Head of caudate nucleus (tissue), 42 donors: ENCODE measurements at regions of chr7 and their contacts with region 1.

Region 1: GRCh38 chr7:732094-732541 is 5.0 kb upstream of the PRKAR1B start:
- DNase-seq: peak in 1 of 42 donors; percentile 39

Region 2: DNA sequence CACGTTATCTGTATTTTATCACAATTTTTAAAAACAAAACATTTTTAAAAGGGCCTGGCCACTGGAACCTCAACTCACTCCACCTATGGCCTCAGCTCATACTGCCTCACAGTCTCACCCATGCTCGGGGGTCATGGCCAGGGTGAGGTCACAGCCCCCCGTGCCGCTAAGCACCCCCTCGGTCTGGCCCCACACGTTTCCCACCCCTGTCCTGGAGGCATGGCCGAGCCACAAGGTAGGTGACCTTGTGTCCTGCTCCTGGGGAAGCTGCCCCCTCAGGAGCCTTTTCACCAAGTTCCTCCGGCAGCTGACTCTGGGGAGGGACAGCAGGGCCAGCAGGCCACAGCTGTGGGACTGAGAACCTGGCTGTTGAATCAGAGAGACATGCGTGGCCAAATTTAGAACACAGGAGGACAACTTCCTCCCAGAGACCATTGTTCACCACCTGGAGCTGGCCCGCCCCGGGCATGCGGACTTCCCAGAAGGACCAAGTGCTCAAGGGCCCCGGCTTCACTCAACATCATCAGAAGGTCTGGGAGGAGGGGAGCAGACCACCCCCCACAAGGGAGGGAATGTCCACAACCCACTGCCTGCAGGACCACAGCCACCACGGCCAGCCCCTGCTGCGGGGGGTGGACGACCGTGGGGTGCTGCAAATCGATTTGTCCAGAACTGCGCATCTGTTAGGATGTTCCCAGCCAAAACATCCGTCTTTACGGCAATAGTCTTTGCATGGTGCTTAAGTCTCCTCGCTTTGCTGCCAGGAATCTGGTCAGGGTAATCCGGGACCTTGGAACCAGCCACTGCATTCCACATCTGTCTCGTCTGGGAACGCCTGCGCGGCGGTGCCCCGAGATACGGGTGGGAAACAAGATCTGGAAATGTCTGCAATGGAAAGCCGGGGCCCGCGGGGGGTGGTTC is 163.8 kb before region 1 on chr7:
- intact Hi-C with region 1: no loop called
- DNase-seq: no peak

Region 3: DNA sequence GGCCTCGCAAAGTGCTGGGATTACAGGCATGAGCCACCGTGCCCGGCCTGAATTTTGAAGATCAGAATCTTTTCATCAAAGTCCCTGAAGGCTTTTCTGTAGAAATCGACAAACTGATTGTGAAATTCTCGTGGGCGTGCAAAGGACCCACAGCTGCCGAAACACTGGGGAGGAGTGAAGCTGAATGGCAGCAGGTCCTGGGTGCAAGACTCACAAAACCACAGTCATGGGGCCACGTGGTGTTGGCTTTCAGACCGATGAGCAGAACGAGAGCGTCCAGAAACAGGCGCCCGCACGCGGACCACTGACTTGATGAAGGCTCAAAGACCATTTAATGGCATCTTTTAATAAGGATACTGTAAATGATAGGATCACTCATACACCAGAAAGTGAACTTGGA is 19.7 kb after region 1 on chr7:
- intact Hi-C with region 1: loop called (anchors 2 kb)
- DNase-seq: no peak